ENCODE measurements at regions of chr5 and their contacts with region 1.

Region 1: GRCh38 chr5:83076742-83077661 is at the starts of genes TMEM167A and XRCC4:
- DNase-seq: peak; percentile 93
- H3K4me3 Mint-ChIP-seq: peak within 1 kb of the TSS; percentile 97
- H3K27ac Mint-ChIP-seq: peak within 1 kb of the TSS; percentile 96
- H3K4me1 Mint-ChIP-seq: peaks cover 41% of the 10 kb centered on the region
- H3K27me3 Mint-ChIP-seq: no peaks in the 10 kb centered on the region
- total RNA-seq, gene TMEM167A: 67.7 and 70.9 TPM in 2 replicates
- total RNA-seq, gene XRCC4: 10.5 and 10.7 TPM in 2 replicates

Region 2: DNA sequence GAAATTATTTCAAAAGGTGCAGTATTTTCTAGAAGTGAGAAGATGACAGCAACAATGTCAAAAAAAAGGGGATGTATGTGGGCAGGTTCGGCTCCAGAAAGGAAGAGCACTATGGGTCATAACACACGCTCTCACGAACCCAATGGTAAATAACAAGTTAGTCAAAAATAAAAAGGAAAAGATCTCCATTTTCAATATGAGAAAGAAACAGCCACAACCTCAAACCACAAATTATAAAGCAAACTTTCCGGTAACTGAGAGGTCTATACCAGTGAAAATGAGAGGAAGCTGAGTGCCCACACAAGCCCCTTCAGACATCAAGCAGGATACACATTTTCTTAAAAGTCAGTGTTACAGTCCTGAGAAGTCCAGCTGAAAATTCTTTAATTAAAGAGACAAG is 400.3 kb before region 1 on chr5:
- intact Hi-C with region 1: loop called (anchors 10 kb)
- DNase-seq: peak; percentile 14
- H3K4me3 Mint-ChIP-seq: peak overlapping the region; percentile 31
- H3K27ac Mint-ChIP-seq: peak overlapping the region; percentile 87
- H3K4me1 Mint-ChIP-seq: peaks cover 22% of the 10 kb centered on the region
- H3K27me3 Mint-ChIP-seq: no peaks in the 10 kb centered on the region

Region 3: DNA sequence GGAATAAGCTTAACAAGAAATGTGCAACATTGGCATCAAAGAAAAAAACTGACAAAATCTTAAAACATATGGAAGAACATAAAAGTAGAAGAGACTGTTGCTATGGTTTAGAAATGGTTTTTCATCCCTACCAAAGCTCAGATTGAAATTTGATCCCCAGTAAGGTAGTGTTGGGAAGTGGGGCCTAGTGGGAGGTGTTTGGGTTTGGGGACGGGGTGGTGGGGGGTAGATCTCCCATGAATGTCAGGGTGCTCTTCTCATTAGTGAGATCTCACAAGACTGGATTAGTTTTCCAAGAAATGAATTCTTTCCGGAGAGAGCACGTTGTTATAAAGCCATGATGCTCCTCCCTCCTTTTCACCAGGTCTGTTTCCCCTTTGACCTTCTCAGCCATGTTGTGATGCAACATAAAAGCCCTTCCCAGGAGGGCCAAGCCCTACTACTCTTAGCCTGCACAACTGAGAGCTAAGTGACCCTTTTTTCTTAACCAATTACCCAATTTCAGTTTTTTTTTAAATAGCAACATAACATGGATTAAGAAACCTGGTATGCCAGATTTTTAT is 10.4 kb before region 1 on chr5:
- intact Hi-C with region 1: no loop called
- DNase-seq: no peak
- H3K4me3 Mint-ChIP-seq: no peak overlapping the region
- H3K27ac Mint-ChIP-seq: no peak overlapping the region
- H3K4me1 Mint-ChIP-seq: peaks cover 23% of the 10 kb centered on the region
- H3K27me3 Mint-ChIP-seq: no peaks in the 10 kb centered on the region

Region 4: DNA sequence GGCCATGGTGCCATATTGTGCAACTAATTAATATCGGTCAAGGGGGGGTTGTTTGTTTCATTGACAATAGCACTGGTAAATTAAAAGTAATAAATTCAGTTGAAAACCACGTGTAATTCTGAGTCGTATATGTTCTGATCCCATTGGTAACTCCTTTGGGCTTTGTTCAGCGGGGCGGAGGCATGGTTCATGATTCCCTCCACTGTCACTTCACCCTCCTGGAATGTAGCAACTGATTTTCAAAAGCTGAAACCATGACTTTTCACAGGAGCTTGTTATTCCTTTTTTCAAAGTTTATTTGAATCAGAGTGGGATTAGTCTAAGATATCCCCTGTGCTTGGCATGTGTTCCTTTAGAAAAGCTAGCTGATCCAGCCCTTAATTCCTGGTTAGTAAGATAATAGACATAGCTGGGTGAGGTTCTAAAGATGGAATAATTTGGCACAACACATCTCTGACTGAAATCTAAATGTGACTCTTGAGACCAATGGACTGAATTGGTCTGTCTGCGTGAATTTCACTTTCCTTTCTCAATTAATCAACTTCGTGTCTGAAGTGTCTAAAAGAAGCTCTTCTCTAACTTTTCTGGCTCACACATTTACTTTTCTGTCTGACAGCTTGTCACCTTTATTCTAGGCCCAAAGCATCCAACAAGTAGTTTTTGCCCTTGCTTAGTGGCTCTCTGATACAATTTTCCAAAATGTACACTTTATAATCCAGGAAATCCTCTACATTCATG is 208.8 kb after region 1 on chr5:
- intact Hi-C with region 1: no loop called
- DNase-seq: no peak
- H3K4me3 Mint-ChIP-seq: no peak overlapping the region
- H3K27ac Mint-ChIP-seq: no peak overlapping the region
- H3K4me1 Mint-ChIP-seq: no peaks in the 10 kb centered on the region
- H3K27me3 Mint-ChIP-seq: no peaks in the 10 kb centered on the region